ENCODE measurements at regions of chr15 and their contacts with region 1.

Region 1: GRCh38 chr15:88638626-88639372 is at the start of gene ISG20:
- DNase-seq: peak; percentile 95
- ATAC-seq: peak; percentile 88
- H3K4me3 ChIP-seq: peak within 1 kb of the TSS; percentile 51 to 79 (median 66)
- H3K27ac ChIP-seq: peak within 1 kb of the TSS; percentile 95
- H3K4me1 ChIP-seq: peaks cover 45% of the 10 kb centered on the region
- H3K27me3 ChIP-seq: no peaks in the 10 kb centered on the region
- CTCF ChIP-seq: peak; percentile 62
- EP300 ChIP-seq: peak; percentile 40 to 45; a peak in 2 of 4 replicates
- POLR2A ChIP-seq: peak; percentile 58 to 74; a peak in 3 of 4 replicates
- RAD21 ChIP-seq: no peak
- total RNA-seq, gene ISG20: 6.3 and 10.5 TPM in 2 replicates

Region 2: DNA sequence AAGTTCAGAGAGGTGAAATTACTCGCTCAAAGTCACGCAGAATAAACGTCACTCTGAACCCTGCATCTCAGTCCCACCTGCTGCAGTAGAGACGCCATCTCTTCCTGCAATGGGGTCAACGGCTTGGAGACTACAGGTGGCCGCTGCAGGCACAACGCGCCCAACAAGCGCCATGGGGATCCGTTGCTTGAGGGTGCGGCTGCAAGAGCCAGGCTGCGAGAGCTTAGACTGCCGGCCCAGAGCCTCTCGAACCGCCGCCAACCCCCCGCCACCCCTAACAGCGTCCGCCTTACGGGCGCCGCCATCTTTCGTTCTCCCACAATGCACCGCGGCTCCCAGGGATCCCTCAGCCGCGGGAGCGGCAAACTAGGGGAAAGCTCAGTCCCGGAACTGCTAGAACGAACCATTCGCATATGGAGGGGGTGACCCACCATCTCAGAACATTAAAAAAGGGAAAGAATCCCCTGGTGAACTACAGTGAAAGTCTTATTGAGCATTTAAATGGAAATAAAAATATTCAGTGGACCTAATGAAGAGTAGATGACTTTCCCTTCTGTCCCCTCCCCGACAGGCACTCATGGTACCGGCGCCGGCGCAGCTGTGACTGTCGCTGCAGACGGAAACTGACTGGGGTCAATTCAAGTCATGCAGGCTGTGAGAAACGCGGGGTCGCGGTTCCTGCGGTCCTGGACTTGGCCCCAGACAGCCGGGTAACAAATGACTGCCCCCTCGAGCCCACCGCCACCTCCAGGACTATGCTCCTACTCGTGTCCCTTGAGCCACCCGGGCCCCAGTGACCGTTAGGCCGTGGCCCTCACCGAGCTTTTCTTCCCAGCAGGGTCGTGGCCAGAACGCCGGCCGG is 171.5 kb before region 1 on chr15 and contains the starts of genes MRPL46 and MRPS11:
- CTCF ChIA-PET with region 1: no interaction called
- POLR2A ChIA-PET with region 1: interaction called, 13 read pairs
- in situ Hi-C with region 1: no loop called
- intact Hi-C with region 1: no loop called
- DNase-seq: peak; percentile 79
- ATAC-seq: peak; percentile 87
- H3K4me3 ChIP-seq: peak within 1 kb of the TSS; percentile 86 to 98 (median 91)
- H3K27ac ChIP-seq: peak within 1 kb of the TSS; percentile 91
- H3K4me1 ChIP-seq: peaks cover 55% of the 10 kb centered on the region
- H3K27me3 ChIP-seq: peaks cover 0 to 3% of the 10 kb centered on the region in 2 experiments; a peak in 1 of 5 replicates
- CTCF ChIP-seq: no peak; the same call in 1 of the 2 replicates
- EP300 ChIP-seq: no peak; a peak in 1 of 4 replicates
- POLR2A ChIP-seq: peak; percentile 76 to 78
- RAD21 ChIP-seq: no peak; the same call in 1 of the 2 replicates
- total RNA-seq, gene MRPL46: 79.2 and 107 TPM in 2 replicates
- total RNA-seq, gene MRPS11: 72.7 and 94.1 TPM in 2 replicates

Region 3: DNA sequence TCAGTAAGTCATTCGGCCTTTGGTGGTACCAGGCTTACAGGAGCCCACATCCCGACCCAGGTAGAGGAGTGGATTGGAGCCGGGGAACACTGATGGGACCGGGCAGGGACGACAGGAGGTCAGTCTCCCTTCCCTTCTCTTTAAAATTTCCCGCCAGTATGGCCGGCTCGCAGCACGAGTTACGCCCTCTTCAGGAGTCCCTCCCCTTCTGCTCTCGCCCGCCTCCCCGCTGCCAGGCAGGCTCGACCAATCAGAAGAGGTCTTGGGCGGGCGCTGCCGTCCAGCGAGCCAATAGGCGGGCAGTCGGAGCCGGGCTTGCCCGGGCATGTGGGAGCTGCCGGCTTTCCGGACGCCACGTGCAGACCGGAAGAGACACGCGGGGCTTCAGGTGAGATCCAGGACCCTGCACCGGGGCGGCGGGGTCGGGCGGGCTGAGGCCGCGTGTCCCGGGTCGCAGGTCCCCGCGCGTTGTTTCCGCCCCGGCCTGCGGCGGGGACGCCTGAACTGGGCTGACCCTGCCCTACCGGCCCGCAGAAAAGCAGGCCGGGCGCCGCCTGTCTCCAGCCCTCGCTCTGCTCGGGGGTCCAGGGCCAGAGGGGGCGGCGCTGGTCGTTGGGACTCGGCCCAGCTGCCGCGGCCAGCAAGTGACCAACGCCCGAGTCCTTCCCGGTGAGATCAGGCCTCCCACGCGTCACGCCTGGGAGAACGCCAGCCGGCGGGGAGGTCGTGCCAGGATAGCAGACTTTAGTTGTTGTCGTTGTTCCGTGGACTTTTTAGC is 17.6 kb before region 1 on chr15 and contains the start of gene AEN:
- CTCF ChIA-PET with region 1: no interaction called
- POLR2A ChIA-PET with region 1: interaction called, 47 read pairs
- in situ Hi-C with region 1: no loop called
- intact Hi-C with region 1: loop called (anchors 1 kb)
- DNase-seq: peak; percentile 92
- ATAC-seq: peak; percentile 92
- H3K4me3 ChIP-seq: peak within 1 kb of the TSS; percentile 87 to 96 (median 94)
- H3K27ac ChIP-seq: peak within 1 kb of the TSS; percentile 93
- H3K4me1 ChIP-seq: peaks cover 46% of the 10 kb centered on the region
- H3K27me3 ChIP-seq: no peaks in the 10 kb centered on the region
- CTCF ChIP-seq: peak; percentile 26; the same call in 1 of the 2 replicates
- EP300 ChIP-seq: no peak
- POLR2A ChIP-seq: peak; percentile 76 to 81
- RAD21 ChIP-seq: peak; percentile 42
- total RNA-seq, gene AEN: 115 and 118 TPM in 2 replicates

Measured in HepG2 (cell line).